Adrenal gland (tissue), 19 donors: ENCODE measurements at regions of chr19 and their contacts with region 1.

Region 1: GRCh38 chr19:41144403-41144802 is 30.2 kb downstream of the CYP2F1 start:
- DNase-seq: peak; percentile 74 to 92 (median 85)
- H3K4me3 ChIP-seq: no peak overlapping the region
- H3K27ac ChIP-seq: no peak overlapping the region
- H3K4me1 ChIP-seq: no peaks in the 10 kb centered on the region
- H3K27me3 ChIP-seq: no peaks in the 10 kb centered on the region
- CTCF ChIP-seq: peak; percentile 71 to 98 (median 86)
- POLR2A ChIP-seq: no peak

Region 2: GRCh38 chr19:40974633-40975037 is 169.8 kb before region 1 on chr19:
- intact Hi-C with region 1: loop called in 1 of 2 experiments (anchors 5 kb)
- DNase-seq: peak; percentile 65 to 88 (median 77)
- H3K4me3 ChIP-seq: no peak overlapping the region
- H3K27ac ChIP-seq: no peak overlapping the region
- H3K4me1 ChIP-seq: no peaks in the 10 kb centered on the region
- H3K27me3 ChIP-seq: no peaks in the 10 kb centered on the region
- CTCF ChIP-seq: peak; percentile 63 to 94 (median 74)
- POLR2A ChIP-seq: no peak

Region 3: GRCh38 chr19:41192574-41193429 is 48.4 kb after region 1 on chr19 and contains the start of gene CYP2S1:
- intact Hi-C with region 1: no loop called
- DNase-seq: no peak
- H3K4me3 ChIP-seq: peak within 1 kb of the TSS in 1 of 4 donors; percentile 49
- H3K27ac ChIP-seq: no peak within 1 kb of the TSS
- H3K4me1 ChIP-seq: peaks cover 0 to 10% of the 10 kb centered on the region in 2 donors
- H3K27me3 ChIP-seq: peaks cover 6% of the 10 kb centered on the region
- CTCF ChIP-seq: no peak
- POLR2A ChIP-seq: no peak
- total RNA-seq, gene CYP2S1: 0.06 to 4.7 (median 2.2) TPM